B cell (primary cell): ENCODE measurements at regions of chr6 and their contacts with region 1.

Region 1: DNA sequence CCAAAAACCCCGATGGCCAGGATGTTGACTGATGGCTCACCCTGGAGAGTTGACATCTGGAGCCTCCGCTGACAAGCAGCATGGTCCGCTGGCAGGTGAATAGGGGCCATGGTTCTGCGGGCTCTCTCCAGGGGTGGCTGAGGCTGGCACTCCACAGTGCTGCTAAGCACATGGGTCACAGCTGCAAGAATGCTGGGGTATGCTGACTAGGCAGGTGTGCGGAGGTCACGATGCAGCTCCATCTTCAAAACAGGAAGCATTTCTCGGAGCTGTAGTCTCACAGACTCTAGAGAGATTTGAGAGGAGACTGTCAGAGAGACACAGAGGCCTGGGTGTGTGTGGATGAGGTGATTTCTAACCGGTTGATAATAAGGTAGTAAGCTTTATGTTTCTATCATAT is 341.6 kb downstream of the NRN1 start:
- DNase-seq: peak; percentile 73
- ATAC-seq: peak; percentile 99
- H3K4me3 ChIP-seq: peak overlapping the region in 1 of 5 experiments; percentile 17
- H3K4me3 Mint-ChIP-seq: peak overlapping the region; percentile 59
- H3K27ac ChIP-seq: peak overlapping the region; percentile 9 to 69
- H3K27ac Mint-ChIP-seq: peak overlapping the region; percentile 88
- H3K4me1 ChIP-seq: peaks cover 25 to 34% of the 10 kb centered on the region in 2 donors
- H3K4me1 Mint-ChIP-seq: peaks cover 52% of the 10 kb centered on the region
- H3K27me3 ChIP-seq: no peaks in the 10 kb centered on the region
- H3K27me3 Mint-ChIP-seq: no peaks in the 10 kb centered on the region
- CTCF ChIP-seq: no peak

Region 2: GRCh38 chr6:5435449-5435848 is 229.7 kb before region 1 on chr6:
- CTCF ChIA-PET with region 1: no interaction called
- POLR2A ChIA-PET with region 1: no interaction called
- intact Hi-C with region 1: no loop called
- DNase-seq: no peak
- ATAC-seq: no peak
- H3K4me3 ChIP-seq: no peak overlapping the region
- H3K4me3 Mint-ChIP-seq: no peak overlapping the region
- H3K27ac ChIP-seq: no peak overlapping the region
- H3K27ac Mint-ChIP-seq: no peak overlapping the region
- H3K4me1 ChIP-seq: no peaks in the 10 kb centered on the region
- H3K4me1 Mint-ChIP-seq: peaks cover 7% of the 10 kb centered on the region
- H3K27me3 ChIP-seq: no peaks in the 10 kb centered on the region
- H3K27me3 Mint-ChIP-seq: no peaks in the 10 kb centered on the region
- CTCF ChIP-seq: no peak

Region 3: DNA sequence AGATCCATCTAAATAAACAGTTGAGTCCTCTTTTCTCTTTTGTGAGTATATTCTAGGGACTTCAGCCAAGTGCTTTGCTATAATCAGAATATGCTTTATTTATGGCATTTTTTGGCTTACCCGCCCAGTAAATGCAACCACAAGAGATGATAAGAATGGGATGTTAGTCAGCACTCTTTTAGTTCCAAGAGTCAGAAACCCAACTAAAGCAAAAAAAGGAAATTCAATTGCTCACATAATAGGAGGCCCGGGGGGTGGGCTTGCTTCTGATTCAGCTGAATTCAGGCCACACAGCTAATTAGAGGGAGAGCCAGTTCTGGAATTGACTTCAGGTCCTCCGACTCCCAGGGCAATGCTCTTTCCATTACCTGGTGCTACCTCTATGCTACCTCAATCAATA is 153.2 kb before region 1 on chr6:
- CTCF ChIA-PET with region 1: no interaction called
- POLR2A ChIA-PET with region 1: no interaction called
- intact Hi-C with region 1: no loop called
- DNase-seq: no peak
- ATAC-seq: no peak
- H3K4me3 ChIP-seq: no peak overlapping the region
- H3K4me3 Mint-ChIP-seq: no peak overlapping the region
- H3K27ac ChIP-seq: no peak overlapping the region
- H3K27ac Mint-ChIP-seq: no peak overlapping the region
- H3K4me1 ChIP-seq: peaks cover 16 to 17% of the 10 kb centered on the region in 2 donors
- H3K4me1 Mint-ChIP-seq: peaks cover 22% of the 10 kb centered on the region
- H3K27me3 ChIP-seq: no peaks in the 10 kb centered on the region
- H3K27me3 Mint-ChIP-seq: no peaks in the 10 kb centered on the region
- CTCF ChIP-seq: no peak

Region 4: DNA sequence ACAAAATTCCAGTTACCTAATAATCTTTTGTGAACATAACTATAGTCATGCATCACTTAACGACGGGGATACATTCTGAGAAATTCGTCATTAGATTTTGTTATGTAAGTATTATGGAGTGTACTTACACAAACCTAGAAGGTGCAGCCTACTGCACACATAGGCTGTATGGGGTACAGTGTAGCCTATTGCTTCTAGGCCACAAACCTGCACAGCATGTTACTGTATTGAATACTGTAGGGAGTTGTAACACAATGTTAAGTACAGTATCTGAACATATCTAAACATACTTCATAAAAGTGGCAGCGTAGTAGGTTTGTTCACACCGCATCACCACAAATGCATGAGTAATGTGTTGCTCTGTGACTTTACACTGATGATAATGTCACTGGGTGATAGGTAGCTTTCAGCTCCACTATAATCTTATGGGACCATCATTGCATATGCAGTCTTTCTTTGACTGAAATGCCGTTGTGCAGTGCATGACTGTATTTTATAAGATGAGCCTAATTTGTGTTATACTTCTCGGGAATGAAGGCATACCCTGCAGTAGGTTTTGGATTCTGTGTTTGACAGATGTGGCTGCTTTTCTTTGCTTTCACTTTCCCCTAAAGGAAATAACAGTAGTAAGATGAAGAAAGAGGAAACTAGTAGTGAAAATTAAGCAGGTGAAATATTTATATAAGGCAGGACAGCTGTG is 38.3 kb before region 1 on chr6:
- CTCF ChIA-PET with region 1: interaction called, 3 read pairs
- POLR2A ChIA-PET with region 1: no interaction called
- intact Hi-C with region 1: loop called (anchors 5 kb)
- DNase-seq: peak; percentile 35
- ATAC-seq: peak; percentile 57
- H3K4me3 ChIP-seq: peak overlapping the region in 1 of 5 experiments; percentile 33
- H3K4me3 Mint-ChIP-seq: peak overlapping the region; percentile 71
- H3K27ac ChIP-seq: peak overlapping the region in 1 of 2 donors; percentile 51
- H3K27ac Mint-ChIP-seq: peak overlapping the region; percentile 81
- H3K4me1 ChIP-seq: peaks cover 14 to 15% of the 10 kb centered on the region in 2 donors
- H3K4me1 Mint-ChIP-seq: peaks cover 40% of the 10 kb centered on the region
- H3K27me3 ChIP-seq: no peaks in the 10 kb centered on the region
- H3K27me3 Mint-ChIP-seq: no peaks in the 10 kb centered on the region
- CTCF ChIP-seq: no peak

Region 5: DNA sequence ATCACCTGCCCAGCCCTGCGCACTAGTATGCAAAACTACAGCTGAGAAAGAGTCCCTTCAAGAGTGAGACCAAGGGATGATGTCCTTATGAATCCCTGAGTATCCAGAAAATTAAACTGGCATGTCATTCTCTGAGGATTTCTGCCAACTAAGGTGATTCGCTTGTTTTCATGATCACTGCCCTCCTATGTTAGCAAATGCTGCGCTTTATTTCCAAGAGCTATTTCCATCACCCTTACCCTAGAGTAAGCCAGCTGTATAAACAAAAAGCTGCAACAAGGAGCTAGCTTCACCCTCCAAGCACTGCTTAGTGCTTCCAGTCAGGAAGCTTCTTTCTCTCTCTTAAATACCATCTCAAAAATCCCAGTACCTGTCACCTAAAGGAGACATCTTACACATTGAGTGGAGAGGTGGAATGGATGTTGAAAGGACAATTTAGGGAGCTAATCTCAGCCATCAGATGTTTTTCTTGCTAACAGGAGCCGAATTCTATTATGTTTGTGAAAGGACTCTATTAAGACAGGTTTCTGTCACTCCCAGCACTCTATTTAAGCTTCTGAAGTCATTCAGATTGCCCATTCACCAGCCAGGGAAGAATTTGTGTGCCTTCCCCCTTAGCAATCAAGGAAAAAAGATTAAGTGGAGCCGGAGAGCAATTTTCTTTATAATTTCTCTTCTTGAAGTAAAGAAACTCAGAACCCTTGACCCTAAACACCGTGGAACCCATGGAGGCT is 19.3 kb after region 1 on chr6:
- CTCF ChIA-PET with region 1: interaction called, 6 read pairs
- POLR2A ChIA-PET with region 1: no interaction called
- intact Hi-C with region 1: loop called (anchors 2 kb)
- DNase-seq: no peak
- ATAC-seq: no peak
- H3K4me3 ChIP-seq: no peak overlapping the region
- H3K4me3 Mint-ChIP-seq: no peak overlapping the region
- H3K27ac ChIP-seq: no peak overlapping the region
- H3K27ac Mint-ChIP-seq: no peak overlapping the region
- H3K4me1 ChIP-seq: peaks cover 23 to 24% of the 10 kb centered on the region in 2 donors
- H3K4me1 Mint-ChIP-seq: peaks cover 24% of the 10 kb centered on the region
- H3K27me3 ChIP-seq: no peaks in the 10 kb centered on the region
- H3K27me3 Mint-ChIP-seq: no peaks in the 10 kb centered on the region
- CTCF ChIP-seq: no peak

Region 6: GRCh38 chr6:5695260-5696245 is 30.4 kb after region 1 on chr6:
- CTCF ChIA-PET with region 1: no interaction called
- POLR2A ChIA-PET with region 1: no interaction called
- intact Hi-C with region 1: loop called (anchors 5 kb)
- DNase-seq: no peak
- ATAC-seq: no peak
- H3K4me3 ChIP-seq: no peak overlapping the region
- H3K4me3 Mint-ChIP-seq: peak overlapping the region; percentile 60
- H3K27ac ChIP-seq: peak overlapping the region in 1 of 2 donors; percentile 33
- H3K27ac Mint-ChIP-seq: peak overlapping the region; percentile 67
- H3K4me1 ChIP-seq: peaks cover 22 to 31% of the 10 kb centered on the region in 2 donors
- H3K4me1 Mint-ChIP-seq: peaks cover 37% of the 10 kb centered on the region
- H3K27me3 ChIP-seq: no peaks in the 10 kb centered on the region
- H3K27me3 Mint-ChIP-seq: no peaks in the 10 kb centered on the region
- CTCF ChIP-seq: no peak

Region 7: DNA sequence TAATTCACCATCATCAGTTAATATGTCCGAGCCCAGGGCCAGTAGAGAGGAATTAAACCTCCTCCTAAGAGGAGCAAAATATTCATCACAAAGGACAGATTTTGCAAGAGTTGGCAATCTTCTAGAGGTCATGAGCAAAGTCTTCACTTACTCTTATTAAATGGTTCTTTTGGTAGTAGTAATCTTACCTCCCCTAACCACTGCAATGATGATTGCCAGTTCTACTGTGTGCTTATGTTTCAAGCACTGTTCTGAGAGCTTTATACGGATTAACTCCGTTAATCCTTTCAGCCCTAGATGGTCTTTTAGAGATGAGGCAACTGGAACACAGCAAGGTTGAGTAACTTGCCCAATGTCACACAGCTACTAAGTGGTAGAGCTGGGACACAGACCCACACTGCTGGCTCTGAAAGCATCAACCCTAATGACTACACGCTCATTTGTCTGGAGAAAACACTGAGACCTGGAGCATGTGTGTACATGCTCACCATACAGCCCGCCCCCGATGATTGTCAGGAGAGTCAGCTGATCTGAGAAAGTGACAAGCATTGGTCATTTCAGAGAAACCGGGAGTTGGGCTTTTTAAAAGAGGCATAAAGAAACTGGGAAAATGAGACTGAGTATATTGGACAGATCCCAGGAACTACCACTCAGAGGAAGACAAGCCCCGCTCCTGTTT is 65.6 kb after region 1 on chr6:
- CTCF ChIA-PET with region 1: no interaction called
- POLR2A ChIA-PET with region 1: no interaction called
- intact Hi-C with region 1: no loop called
- DNase-seq: no peak
- ATAC-seq: no peak
- H3K4me3 ChIP-seq: no peak overlapping the region
- H3K4me3 Mint-ChIP-seq: no peak overlapping the region
- H3K27ac ChIP-seq: no peak overlapping the region
- H3K27ac Mint-ChIP-seq: no peak overlapping the region
- H3K4me1 ChIP-seq: peaks cover 34 to 39% of the 10 kb centered on the region in 2 donors
- H3K4me1 Mint-ChIP-seq: peaks cover 38% of the 10 kb centered on the region
- H3K27me3 ChIP-seq: no peaks in the 10 kb centered on the region
- H3K27me3 Mint-ChIP-seq: no peaks in the 10 kb centered on the region
- CTCF ChIP-seq: no peak